ENCODE measurements at regions of chr1 and their contacts with region 1.

Region 1: GRCh38 chr1:109307274-109308021 is 637 bp upstream of the MYBPHL start:
- DNase-seq: peak; percentile 41
- ATAC-seq: peak; percentile 98
- H3K4me3 Mint-ChIP-seq: peak overlapping the region; percentile 60
- H3K27ac Mint-ChIP-seq: peak overlapping the region; percentile 80
- H3K4me1 Mint-ChIP-seq: peaks cover 19% of the 10 kb centered on the region
- H3K27me3 Mint-ChIP-seq: peaks cover 5% of the 10 kb centered on the region
- CTCF ChIP-seq: no peak

Region 2: DNA sequence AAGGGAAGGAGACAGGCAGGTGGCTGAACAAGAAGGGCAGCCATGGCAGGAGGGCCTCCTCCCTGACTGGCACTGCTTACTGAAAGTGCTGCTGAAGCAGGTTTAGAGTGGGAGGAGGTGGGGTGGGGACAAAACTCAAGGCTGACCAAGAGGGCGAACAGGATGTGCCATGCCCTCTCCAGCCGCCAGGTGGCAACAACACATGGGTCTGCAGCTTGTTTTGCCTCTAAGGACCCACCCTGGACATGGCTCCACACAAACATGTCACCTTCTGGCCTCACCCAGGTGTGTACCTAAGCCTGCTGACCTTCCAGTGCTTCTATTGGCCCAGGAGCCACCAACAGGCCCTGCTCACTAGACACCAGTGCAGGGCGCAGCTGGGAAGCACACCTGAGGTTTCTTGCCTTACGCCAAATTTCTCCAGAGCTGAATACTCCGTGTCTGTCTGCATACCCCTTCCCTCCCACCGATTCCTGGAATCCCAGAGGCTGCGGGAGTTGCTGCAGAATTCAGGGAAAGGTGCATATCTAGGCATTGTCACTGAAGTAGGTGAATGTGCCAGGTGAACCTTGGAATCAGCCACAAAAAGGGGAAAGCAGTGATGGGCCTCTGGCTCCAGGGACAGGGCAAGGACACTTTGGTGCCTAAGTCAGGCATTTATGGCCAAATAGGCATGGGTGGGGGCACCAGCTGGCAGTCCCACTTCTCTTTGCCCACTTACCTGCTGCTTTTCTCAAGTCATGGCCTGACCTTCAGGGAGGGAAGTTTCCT is 29.8 kb before region 1 on chr1:
- CTCF ChIA-PET with region 1: interaction called, 12 read pairs
- POLR2A ChIA-PET with region 1: interaction called, 3 read pairs
- intact Hi-C with region 1: no loop called
- DNase-seq: peak; percentile 63
- ATAC-seq: peak; percentile 95
- H3K4me3 Mint-ChIP-seq: no peak overlapping the region
- H3K27ac Mint-ChIP-seq: no peak overlapping the region
- H3K4me1 Mint-ChIP-seq: peaks cover 5% of the 10 kb centered on the region
- H3K27me3 Mint-ChIP-seq: no peaks in the 10 kb centered on the region
- CTCF ChIP-seq: no peak

Region 3: DNA sequence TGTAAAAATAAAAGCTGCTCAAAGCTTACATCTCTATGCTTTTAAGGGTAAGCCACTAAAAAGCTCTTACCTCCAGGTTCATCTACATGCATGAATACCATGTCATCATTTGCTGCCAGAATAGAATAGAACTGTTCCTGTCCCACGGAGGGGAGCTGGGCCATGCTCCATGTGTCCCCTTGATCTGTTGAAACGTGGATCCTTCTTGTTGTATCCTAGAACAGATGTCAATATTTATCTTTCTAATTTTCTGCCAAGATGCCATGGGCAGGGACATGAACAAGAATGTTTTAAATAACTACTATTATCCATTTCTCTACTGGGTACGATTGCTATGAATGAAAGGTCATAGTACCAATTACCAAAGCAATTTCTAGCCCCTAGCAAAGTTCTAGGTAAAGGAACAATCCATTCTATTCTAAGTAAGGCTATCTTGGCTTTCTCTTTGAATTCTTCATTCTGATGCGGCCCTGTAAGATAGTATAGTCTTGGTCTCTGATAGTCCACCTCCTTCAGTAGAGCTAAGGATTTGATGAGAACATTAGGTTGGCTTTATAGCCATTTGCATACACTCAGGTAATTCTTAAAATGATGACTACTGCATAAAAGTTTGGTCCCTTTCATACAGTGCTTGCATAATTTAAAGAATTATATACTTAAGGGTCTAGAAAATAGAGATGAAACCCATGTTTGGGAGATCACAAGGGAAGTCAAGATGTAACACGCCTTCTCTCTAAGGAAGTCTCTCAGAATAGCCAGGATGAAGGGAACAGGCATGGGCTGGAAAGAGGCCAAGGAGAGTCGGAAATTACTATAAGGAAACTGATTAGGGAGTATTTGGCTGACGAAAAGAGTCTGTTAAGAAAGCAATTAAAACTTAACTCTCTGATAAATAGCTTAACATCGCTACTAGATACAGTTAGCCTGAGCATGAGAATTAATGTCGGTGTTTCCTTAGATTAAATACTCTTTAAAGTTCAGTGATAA is 34.8 kb after region 1 on chr1:
- CTCF ChIA-PET with region 1: no interaction called
- POLR2A ChIA-PET with region 1: no interaction called
- intact Hi-C with region 1: no loop called
- DNase-seq: no peak
- ATAC-seq: no peak
- H3K4me3 Mint-ChIP-seq: no peak overlapping the region
- H3K27ac Mint-ChIP-seq: no peak overlapping the region
- H3K4me1 Mint-ChIP-seq: no peaks in the 10 kb centered on the region
- H3K27me3 Mint-ChIP-seq: peaks cover 3% of the 10 kb centered on the region
- CTCF ChIP-seq: no peak